Activated CD4-positive, alpha-beta memory T cell treated with anti-CD3 and anti-CD28 coated beads for 36 hours (primary cell): ENCODE measurements at regions of chr4 and their contacts with region 1.

Region 1: GRCh38 chr4:147799986-147800555 is 68.2 kb downstream of the ARHGAP10 start:
- DNase-seq: peak; percentile 84
- H3K4me3 Mint-ChIP-seq: no peak overlapping the region
- H3K27ac Mint-ChIP-seq: peak overlapping the region; percentile 29
- H3K4me1 Mint-ChIP-seq: peaks cover 23% of the 10 kb centered on the region
- H3K27me3 Mint-ChIP-seq: no peaks in the 10 kb centered on the region

Region 2: DNA sequence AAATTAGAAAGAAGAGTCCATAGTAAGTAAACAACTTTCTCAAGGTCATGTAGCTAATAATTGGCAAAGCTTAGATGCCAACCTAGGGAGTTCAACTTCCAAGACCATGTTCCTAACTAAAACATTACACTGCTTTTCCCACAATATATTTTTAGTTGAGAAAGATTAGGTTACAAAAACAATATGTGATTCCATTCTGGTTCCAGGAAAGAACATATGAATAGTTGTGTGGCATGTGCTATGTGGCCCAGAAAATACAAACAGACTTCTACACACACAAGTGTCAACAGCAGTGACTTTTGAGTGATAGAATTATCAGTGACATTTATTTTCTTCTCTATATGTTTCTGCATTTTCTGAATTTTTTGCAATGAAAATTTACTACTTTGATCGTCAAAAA is 381.8 kb before region 1 on chr4:
- CTCF ChIA-PET with region 1: no interaction called
- POLR2A ChIA-PET with region 1: no interaction called
- intact Hi-C with region 1: no loop called
- DNase-seq: no peak
- H3K4me3 Mint-ChIP-seq: no peak overlapping the region
- H3K27ac Mint-ChIP-seq: no peak overlapping the region
- H3K4me1 Mint-ChIP-seq: no peaks in the 10 kb centered on the region
- H3K27me3 Mint-ChIP-seq: peaks cover 2% of the 10 kb centered on the region

Region 3: GRCh38 chr4:147769386-147769785 is 30.7 kb before region 1 on chr4:
- CTCF ChIA-PET with region 1: no interaction called
- POLR2A ChIA-PET with region 1: no interaction called
- intact Hi-C with region 1: loop called (anchors 1 kb)
- DNase-seq: no peak
- H3K4me3 Mint-ChIP-seq: no peak overlapping the region
- H3K27ac Mint-ChIP-seq: no peak overlapping the region
- H3K4me1 Mint-ChIP-seq: peaks cover 17% of the 10 kb centered on the region
- H3K27me3 Mint-ChIP-seq: no peaks in the 10 kb centered on the region

Region 4: DNA sequence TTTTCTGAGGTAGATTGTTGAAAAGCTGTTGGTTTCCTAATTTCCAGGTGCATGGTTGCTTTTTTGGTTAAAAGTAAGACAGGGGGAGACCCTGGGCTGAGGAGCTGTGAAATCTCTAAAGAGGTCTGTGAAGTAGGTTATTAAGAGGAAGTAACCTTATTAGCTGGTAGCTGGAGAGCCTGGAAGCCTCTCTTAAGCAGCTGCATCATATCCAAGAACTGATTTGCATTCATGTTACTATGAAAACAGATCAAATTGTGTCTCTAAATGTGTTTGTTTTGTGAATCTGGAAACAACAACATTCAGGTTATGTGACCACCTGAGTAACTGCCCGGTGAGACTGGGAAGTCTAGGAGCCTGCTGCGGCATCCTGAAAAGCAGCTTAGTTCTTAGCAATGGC is 14.0 kb before region 1 on chr4:
- CTCF ChIA-PET with region 1: no interaction called
- POLR2A ChIA-PET with region 1: no interaction called
- intact Hi-C with region 1: no loop called
- DNase-seq: no peak
- H3K4me3 Mint-ChIP-seq: no peak overlapping the region
- H3K27ac Mint-ChIP-seq: no peak overlapping the region
- H3K4me1 Mint-ChIP-seq: peaks cover 34% of the 10 kb centered on the region
- H3K27me3 Mint-ChIP-seq: no peaks in the 10 kb centered on the region

Region 5: DNA sequence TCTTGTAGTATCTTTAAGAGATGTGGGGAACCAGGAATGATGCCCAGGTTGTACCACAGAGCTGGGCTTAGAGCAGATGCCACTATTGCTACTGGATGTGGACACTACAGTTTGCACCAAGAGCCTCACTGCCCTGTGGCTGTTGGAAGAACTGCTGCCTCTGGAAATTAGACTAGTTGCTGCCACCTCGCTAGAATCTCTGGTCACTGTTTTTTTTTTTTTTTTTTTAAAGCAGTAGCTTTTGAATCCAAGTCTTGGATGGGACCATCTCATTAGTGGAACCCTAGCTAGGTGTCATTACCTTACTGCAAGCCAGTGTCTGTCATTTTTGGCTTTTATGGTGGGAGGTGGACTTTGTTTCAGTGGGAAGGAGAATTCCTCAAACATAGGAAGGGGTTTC is 37.4 kb after region 1 on chr4:
- CTCF ChIA-PET with region 1: no interaction called
- POLR2A ChIA-PET with region 1: no interaction called
- intact Hi-C with region 1: loop called (anchors 2 kb)
- DNase-seq: no peak
- H3K4me3 Mint-ChIP-seq: no peak overlapping the region
- H3K27ac Mint-ChIP-seq: no peak overlapping the region
- H3K4me1 Mint-ChIP-seq: peaks cover 22% of the 10 kb centered on the region
- H3K27me3 Mint-ChIP-seq: no peaks in the 10 kb centered on the region

Region 6: DNA sequence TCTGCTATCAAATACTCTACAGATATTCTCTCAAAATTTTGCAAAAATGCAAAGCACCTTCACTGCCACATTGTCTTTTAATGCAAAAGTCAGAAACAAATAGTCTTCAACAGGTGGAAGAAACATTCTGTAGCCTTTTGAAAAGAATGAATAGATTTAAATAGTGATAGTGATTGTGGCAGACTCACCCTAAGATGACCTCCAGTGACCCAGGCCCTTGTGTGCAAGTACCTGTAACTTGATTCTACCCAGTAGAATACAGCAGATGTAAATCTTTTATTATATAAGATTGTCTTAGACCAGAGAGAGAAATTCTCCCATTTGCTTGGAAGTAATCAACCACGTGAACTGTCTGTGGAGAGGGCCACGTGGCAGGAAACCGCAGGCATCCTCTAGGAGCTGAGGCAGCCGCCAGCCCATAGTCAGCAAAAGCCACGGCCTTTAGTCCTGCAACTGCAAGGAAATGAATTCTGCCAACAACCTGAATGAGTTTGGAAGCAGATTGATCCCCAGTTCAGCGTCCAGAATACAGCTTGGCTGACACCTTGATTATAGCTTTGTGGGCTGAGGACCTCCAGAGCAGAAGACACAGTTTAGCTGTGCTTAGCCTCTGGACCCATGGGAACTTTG is 204.3 kb after region 1 on chr4:
- CTCF ChIA-PET with region 1: no interaction called
- POLR2A ChIA-PET with region 1: no interaction called
- intact Hi-C with region 1: no loop called
- DNase-seq: no peak
- H3K4me3 Mint-ChIP-seq: no peak overlapping the region
- H3K27ac Mint-ChIP-seq: no peak overlapping the region
- H3K4me1 Mint-ChIP-seq: peaks cover 7% of the 10 kb centered on the region
- H3K27me3 Mint-ChIP-seq: no peaks in the 10 kb centered on the region